Heart left ventricle (tissue), 16 donors: ENCODE measurements at regions of chr10 and their contacts with region 1.

Region 1: DNA sequence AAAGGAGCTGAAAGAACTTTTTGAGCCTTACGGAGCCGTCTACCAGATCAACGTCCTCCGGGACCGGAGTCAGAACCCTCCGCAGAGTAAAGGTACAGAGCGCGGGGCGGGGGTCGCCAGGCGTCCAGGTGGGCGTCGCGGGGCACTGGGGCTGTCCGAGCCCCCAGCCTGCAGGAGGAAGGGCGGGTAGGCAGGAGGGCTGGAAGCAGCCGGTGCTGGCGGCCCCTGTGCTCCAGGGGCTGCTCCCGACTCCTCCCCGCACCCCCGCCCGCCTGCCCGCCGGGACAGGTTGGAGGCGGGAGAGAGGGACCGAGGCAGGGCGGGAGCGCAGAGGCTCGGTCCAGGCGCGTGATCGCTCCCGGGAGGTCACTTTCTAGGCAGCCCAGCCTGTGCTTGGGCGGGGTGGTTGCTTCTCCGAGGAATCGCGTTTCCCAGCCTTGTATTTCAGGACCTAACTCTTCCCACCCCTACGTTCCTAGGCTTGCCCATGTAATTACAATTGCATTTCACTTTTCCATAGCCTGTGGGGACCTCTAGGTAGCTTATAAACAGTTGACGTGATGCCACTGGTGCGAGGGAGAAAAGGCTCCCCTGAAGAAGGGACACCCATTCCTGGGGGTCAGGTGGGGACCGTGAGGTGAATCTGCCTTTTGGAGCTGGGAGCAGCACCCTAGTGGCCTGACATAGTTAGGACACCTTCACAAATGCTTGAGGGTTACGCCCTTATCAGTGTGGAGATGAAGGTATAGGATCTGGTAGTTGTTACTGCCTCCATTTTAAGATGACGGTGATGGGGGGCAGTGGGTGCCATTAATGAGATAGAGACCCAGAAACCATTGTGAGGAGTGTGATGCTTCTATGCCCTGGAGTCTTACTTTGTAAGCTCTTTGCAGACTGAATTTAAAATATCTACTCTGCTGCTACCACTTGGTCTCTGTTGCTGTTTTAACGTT is 148.2 kb downstream of the CELF2 start:
- DNase-seq: peak; percentile 57 to 83 (median 72)
- ATAC-seq: peak; percentile 22 to 76 (median 74)
- H3K4me3 ChIP-seq: peak overlapping the region; percentile 22 to 87 (median 70)
- H3K27ac ChIP-seq: peak overlapping the region; percentile 64 to 98 (median 86)
- H3K4me1 ChIP-seq: peaks cover 0 to 70% (median 36%) of the 10 kb centered on the region in 12 donors
- H3K27me3 ChIP-seq: no peaks in the 10 kb centered on the region
- CTCF ChIP-seq: peak in 9 of 12 donors; percentile 22 to 54 (median 34)
- POLR2A ChIP-seq: no peak

Region 2: GRCh38 chr10:10818082-10818481 is 347.8 kb before region 1 on chr10:
- intact Hi-C with region 1: loop called in 1 of 10 experiments (anchors 10 kb)
- DNase-seq: peak in 2 of 5 donors; percentile 56 to 58
- ATAC-seq: peak; percentile 74 to 83 (median 79)
- H3K4me3 ChIP-seq: no peak overlapping the region
- H3K27ac ChIP-seq: peak overlapping the region in 8 of 12 donors; percentile 9 to 67 (median 31)
- H3K4me1 ChIP-seq: peaks cover 0 to 29% (median 14%) of the 10 kb centered on the region in 12 donors
- H3K27me3 ChIP-seq: no peaks in the 10 kb centered on the region
- CTCF ChIP-seq: no peak
- POLR2A ChIP-seq: no peak

Region 3: DNA sequence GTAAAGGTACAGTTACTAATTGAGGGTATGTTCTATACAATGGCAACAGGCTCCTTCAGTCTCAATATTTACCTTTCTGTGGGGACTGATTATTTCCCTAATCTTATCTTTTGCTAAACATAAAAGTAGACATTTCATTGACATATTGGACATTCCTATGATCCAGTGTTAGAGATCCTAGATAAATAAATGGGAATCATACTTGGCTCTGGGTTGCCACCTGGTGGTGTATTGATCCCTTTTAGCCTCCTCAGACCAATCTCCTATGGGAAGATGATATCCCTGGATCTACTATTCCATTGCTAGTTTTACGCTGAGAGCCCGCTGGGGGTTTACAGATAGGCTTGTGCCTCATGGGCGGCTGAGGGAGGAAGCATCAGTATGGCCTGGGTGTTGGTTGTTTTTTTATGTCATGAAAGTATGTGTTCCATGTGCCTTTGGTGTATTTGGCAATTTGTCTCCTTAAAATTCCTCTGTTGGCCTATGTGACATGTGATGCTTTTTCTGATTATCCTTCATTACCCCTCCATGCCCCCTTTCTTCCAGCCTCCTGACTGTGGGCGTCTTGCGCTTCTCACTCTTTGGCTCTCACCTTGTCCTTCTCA is 129.4 kb before region 1 on chr10:
- intact Hi-C with region 1: loop called in 3 of 10 experiments (anchors 5 to 10 kb)
- DNase-seq: peak in 1 of 5 donors; percentile 37
- ATAC-seq: peak; percentile 50 to 60 (median 59)
- H3K4me3 ChIP-seq: no peak overlapping the region
- H3K27ac ChIP-seq: peak overlapping the region in 8 of 12 donors; percentile 4 to 88 (median 65)
- H3K4me1 ChIP-seq: peaks cover 7 to 59% (median 32%) of the 10 kb centered on the region in 12 donors
- H3K27me3 ChIP-seq: no peaks in the 10 kb centered on the region
- CTCF ChIP-seq: peak; percentile 35 to 75 (median 65)
- POLR2A ChIP-seq: no peak

Region 4: DNA sequence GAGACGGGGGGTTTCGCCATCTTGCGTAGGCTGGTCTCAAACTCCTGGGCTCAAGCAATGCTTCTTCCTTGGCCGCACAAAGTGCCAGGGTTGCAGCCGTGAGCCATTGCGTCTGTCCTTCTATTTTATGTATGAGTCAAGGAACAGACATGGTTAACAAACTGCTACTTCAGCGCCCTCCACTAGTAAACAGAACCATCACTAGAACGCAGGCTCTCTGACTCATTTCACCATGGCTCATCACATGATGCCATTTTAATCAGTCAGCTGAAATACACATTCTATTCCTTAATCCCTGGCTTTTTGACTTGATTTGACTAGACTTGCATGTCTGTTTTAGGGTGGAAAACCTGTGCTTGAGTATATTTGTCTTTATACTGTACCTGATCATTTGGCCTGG is 106.9 kb before region 1 on chr10:
- intact Hi-C with region 1: loop called in 1 of 10 experiments (anchors 10 kb)
- DNase-seq: no peak
- ATAC-seq: peak in 3 of 4 donors; percentile 7 to 48 (median 48)
- H3K4me3 ChIP-seq: no peak overlapping the region
- H3K27ac ChIP-seq: peak overlapping the region in 1 of 12 donors; percentile 15
- H3K4me1 ChIP-seq: peaks cover 0 to 52% (median 29%) of the 10 kb centered on the region in 12 donors
- H3K27me3 ChIP-seq: no peaks in the 10 kb centered on the region
- CTCF ChIP-seq: no peak
- POLR2A ChIP-seq: no peak

Region 5: DNA sequence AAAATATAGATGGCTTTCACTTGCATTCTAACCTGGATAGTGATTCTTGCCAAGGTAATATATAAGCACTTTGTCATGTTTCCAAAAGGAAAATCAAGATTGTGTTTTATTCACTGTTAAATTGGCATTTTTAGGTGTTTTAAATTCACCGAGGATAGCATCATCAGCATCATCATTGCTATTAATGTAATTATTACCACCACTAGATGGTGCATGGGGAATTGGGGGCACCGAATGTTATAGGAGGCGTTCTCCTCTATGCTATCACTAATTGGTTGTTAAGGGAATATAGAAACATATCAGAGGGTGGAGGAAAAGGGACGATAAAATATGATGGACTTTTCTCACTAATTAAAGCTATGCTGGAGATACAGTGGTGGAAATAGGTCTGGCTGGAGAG is 52.7 kb before region 1 on chr10:
- intact Hi-C with region 1: loop called in 1 of 10 experiments (anchors 10 kb)
- DNase-seq: no peak
- ATAC-seq: no peak
- H3K4me3 ChIP-seq: no peak overlapping the region
- H3K27ac ChIP-seq: peak overlapping the region in 3 of 12 donors; percentile 35 to 81 (median 80)
- H3K4me1 ChIP-seq: peaks cover 6 to 75% (median 31%) of the 10 kb centered on the region in 12 donors
- H3K27me3 ChIP-seq: no peaks in the 10 kb centered on the region
- CTCF ChIP-seq: peak in 8 of 12 donors; percentile 20 to 48 (median 33)
- POLR2A ChIP-seq: no peak